GM10248 (cell line): ENCODE measurements at regions of chr1 and their contacts with region 1.

Region 1: GRCh38 chr1:38152351-38153065 is 105.9 kb upstream of the POU3F1 start:
- DNase-seq: no peak
- CTCF ChIP-seq: no peak

Region 2: GRCh38 chr1:38138498-38139233 is 13.8 kb before region 1 on chr1:
- CTCF ChIA-PET with region 1: interaction called, 10 read pairs
- POLR2A ChIA-PET with region 1: no interaction called
- DNase-seq: peak; percentile 7
- CTCF ChIP-seq: no peak

Region 3: GRCh38 chr1:38162866-38163265 is 10.4 kb after region 1 on chr1:
- CTCF ChIA-PET with region 1: interaction called, 12 read pairs
- POLR2A ChIA-PET with region 1: no interaction called
- DNase-seq: no peak
- CTCF ChIP-seq: no peak

Region 4: DNA sequence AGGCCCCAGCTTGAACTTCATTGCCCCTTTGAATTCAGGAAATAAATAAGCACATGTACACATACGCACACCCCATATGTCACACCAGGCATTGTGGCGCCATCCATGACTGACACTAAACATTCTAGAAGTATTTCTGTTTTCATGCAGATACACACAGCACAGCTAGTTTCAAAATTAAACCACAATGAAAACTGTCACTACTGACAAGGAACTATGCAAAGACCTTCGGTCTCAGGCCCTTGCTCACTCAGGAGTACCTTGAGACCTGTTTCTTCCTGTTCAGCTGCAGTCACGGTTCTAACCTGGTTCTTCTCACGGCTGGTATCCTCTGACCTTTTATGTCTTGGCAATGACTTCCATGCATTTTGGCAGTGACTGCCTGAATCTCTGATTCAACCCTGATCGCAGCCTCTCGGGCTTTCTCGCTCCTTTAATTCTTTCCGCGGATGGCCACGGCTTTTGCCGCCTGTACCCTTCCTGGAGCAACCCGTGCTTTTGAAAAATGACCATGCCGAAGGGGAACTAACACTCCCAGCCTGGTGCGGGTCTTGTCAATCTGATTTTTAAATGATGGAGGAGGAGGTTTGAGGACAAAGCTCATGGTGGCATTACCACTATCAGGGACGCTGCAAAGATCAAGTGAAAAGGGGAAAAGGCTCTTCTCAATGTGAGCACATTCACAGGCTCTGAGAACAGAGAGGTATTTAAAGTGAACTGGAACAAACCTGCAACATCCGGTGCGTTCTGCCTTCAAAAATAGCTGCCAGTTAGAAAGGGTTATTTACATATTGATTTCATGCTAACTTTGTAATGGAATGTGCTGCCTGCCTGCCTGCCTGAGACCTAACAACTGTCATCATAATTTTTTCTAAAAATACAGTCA is 322.5 kb after region 1 on chr1:
- CTCF ChIA-PET with region 1: no interaction called
- POLR2A ChIA-PET with region 1: no interaction called
- DNase-seq: peak; percentile 79
- CTCF ChIP-seq: no peak